Gastrocnemius medialis (tissue), 4 donors: ENCODE measurements at regions of chr6 and their contacts with region 1.

Region 1: DNA sequence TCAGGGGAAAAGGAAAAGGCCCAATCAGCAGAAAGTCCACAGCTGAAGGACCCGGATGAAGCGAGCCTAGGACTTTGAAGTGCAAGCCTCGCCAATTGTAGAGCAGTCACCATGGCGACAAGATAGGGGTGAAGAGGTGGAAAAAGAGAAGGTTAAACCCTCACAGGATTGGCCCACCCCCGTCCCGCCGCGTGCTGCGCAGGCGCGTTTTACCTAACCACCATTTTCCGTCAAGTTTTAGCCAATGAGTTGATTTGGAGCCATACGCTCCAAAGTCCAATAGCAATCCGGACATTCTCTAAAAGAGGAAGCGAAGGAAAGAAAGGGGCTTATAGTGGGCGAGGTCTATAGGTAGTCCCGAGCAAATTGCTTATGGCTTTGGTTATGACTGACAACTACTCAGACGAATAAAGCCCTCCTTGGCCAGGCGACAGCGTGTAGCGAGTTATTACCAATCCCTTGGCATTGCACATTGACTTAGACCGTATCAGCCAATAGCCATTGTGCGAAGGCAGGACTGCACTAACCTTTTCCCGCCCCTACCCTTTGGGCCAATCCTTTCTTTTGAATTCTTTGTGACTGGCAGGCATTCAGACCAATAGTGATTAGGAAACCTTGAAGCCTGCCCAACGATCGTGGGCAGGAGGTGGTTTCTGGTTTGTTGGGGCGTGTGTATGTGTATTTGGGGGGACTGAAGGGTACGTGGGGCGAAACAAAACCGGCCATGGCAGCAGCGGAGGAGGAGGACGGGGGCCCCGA is at the start of gene RNF5:
- DNase-seq: peak; percentile 98 to 99
- ATAC-seq: peak; percentile 84 to 88
- H3K4me3 ChIP-seq: peak within 1 kb of the TSS; percentile 81 to 99 (median 96)
- H3K27ac ChIP-seq: peak within 1 kb of the TSS; percentile 92 to 99 (median 96)
- H3K4me1 ChIP-seq: peaks cover 41 to 46% of the 10 kb centered on the region in 2 donors
- H3K27me3 ChIP-seq: no peaks in the 10 kb centered on the region
- CTCF ChIP-seq: no peak
- POLR2A ChIP-seq: peak; percentile 46 to 63
- total RNA-seq, gene RNF5: 54.6 to 98.3 (median 78.1) TPM

Region 2: GRCh38 chr6:31308050-31308844 is 869.7 kb before region 1 on chr6:
- in situ Hi-C with region 1: no loop called
- intact Hi-C with region 1: no loop called
- DNase-seq: peak in 1 of 2 donors; percentile 19
- ATAC-seq: peak in 1 of 2 donors; percentile 41
- H3K4me3 ChIP-seq: peak overlapping the region; percentile 34 to 61 (median 43)
- H3K27ac ChIP-seq: no peak overlapping the region
- H3K4me1 ChIP-seq: peaks cover 0 to 8% of the 10 kb centered on the region in 2 donors
- H3K27me3 ChIP-seq: peaks cover 4 to 33% (median 28%) of the 10 kb centered on the region in 3 donors
- CTCF ChIP-seq: no peak
- POLR2A ChIP-seq: no peak

Region 3: GRCh38 chr6:31541658-31542521 is 636.1 kb before region 1 on chr6 and contains the start of gene DDX39B:
- in situ Hi-C with region 1: loop called in 1 of 4 experiments (anchors 25 kb)
- intact Hi-C with region 1: no loop called
- DNase-seq: peak; percentile 96 to 97
- ATAC-seq: peak; percentile 94 to 95
- H3K4me3 ChIP-seq: peak within 1 kb of the TSS; percentile 81 to 91 (median 85)
- H3K27ac ChIP-seq: peak within 1 kb of the TSS; percentile 96 to 98 (median 96)
- H3K4me1 ChIP-seq: peaks cover 31 to 38% of the 10 kb centered on the region in 2 donors
- H3K27me3 ChIP-seq: no peaks in the 10 kb centered on the region
- CTCF ChIP-seq: no peak
- POLR2A ChIP-seq: peak; percentile 72 to 77
- total RNA-seq, gene DDX39B: 107 to 198 (median 144) TPM

Region 4: GRCh38 chr6:31901953-31902643 is 275.9 kb before region 1 on chr6 and contains the start of gene ZBTB12:
- in situ Hi-C with region 1: no loop called
- intact Hi-C with region 1: loop called (anchors 5 kb)
- DNase-seq: peak; percentile 78 to 82
- ATAC-seq: peak; percentile 58 to 65
- H3K4me3 ChIP-seq: peak within 1 kb of the TSS; percentile 56 to 93 (median 80)
- H3K27ac ChIP-seq: peak within 1 kb of the TSS; percentile 78 to 89 (median 86)
- H3K4me1 ChIP-seq: peaks cover 15 to 19% of the 10 kb centered on the region in 2 donors
- H3K27me3 ChIP-seq: no peaks in the 10 kb centered on the region
- CTCF ChIP-seq: peak in 1 of 5 experiments; percentile 20
- POLR2A ChIP-seq: peak; percentile 22 to 33
- total RNA-seq, gene ZBTB12: 0.26 TPM in 1 of 4 donors, not detected in the others

Region 5: DNA sequence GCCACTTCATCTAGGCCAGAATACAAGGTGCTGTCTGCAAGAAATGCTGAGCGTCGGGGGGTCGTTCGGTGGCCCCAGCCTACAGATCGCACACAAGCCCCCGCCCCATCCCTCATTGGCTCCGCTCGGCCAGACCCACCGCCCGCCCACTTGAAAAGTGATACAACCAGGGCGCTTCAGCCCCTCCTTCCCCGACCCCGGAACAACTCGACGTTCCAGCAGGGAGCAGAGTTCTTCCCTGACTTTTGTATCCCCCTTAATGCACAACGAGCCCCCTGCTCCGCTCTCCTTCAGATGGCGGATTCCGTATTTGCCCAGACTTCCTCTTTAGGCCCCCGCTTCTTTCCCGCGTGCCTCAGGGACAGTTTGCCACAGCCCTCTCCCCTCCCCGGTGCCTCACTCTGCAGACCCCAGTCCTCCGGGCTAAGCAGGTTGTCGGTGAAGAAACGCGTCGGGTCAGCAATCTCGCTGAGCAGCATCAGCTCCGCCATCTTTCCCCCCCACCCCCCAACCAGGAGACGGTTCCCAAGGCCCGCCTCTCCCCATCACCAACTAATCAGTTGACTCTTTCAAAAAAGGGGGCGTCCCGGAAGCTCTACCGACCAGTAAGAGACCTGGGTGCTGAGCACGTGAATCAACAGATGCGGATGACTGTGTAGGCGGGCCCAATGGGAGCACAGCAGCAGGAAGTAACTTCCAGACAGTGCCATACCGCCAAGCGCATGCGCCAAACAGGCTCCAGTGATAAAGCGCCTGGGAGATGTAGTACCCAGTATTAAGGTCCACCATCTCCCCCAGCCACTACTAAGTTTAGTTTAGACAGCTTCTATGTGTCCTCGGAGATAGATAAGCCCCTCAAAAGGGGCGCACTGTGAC is 50.0 kb before region 1 on chr6 and contains the start of gene ATF6B:
- in situ Hi-C with region 1: no loop called
- intact Hi-C with region 1: loop called (anchors 1 kb)
- DNase-seq: peak; percentile 100
- ATAC-seq: peak; percentile 95 to 96
- H3K4me3 ChIP-seq: peak within 1 kb of the TSS; percentile 91 to 99 (median 96)
- H3K27ac ChIP-seq: peak within 1 kb of the TSS; percentile 89 to 93 (median 92)
- H3K4me1 ChIP-seq: peaks cover 24 to 26% of the 10 kb centered on the region in 2 donors
- H3K27me3 ChIP-seq: no peaks in the 10 kb centered on the region
- CTCF ChIP-seq: no peak
- POLR2A ChIP-seq: peak; percentile 57 to 67
- total RNA-seq, gene ATF6B: 6.8 to 18.4 (median 9.5) TPM

Region 6: GRCh38 chr6:32140420-32141046 is 37.4 kb before region 1 on chr6:
- in situ Hi-C with region 1: no loop called
- intact Hi-C with region 1: no loop called
- DNase-seq: no peak
- ATAC-seq: no peak
- H3K4me3 ChIP-seq: no peak overlapping the region
- H3K27ac ChIP-seq: no peak overlapping the region
- H3K4me1 ChIP-seq: no peaks in the 10 kb centered on the region
- H3K27me3 ChIP-seq: no peaks in the 10 kb centered on the region
- CTCF ChIP-seq: no peak
- POLR2A ChIP-seq: no peak

Region 7: GRCh38 chr6:32188381-32189004 is 10.5 kb after region 1 on chr6:
- in situ Hi-C with region 1: no loop called
- intact Hi-C with region 1: no loop called
- DNase-seq: no peak
- ATAC-seq: no peak
- H3K4me3 ChIP-seq: peak overlapping the region; percentile 71 to 87 (median 78)
- H3K27ac ChIP-seq: peak overlapping the region; percentile 96 to 99 (median 98)
- H3K4me1 ChIP-seq: peaks cover 33 to 50% of the 10 kb centered on the region in 2 donors
- H3K27me3 ChIP-seq: no peaks in the 10 kb centered on the region
- CTCF ChIP-seq: no peak
- POLR2A ChIP-seq: no peak

Region 8: GRCh38 chr6:32843979-32844838 is 666.2 kb after region 1 on chr6 and contains the start of gene PSMB8:
- in situ Hi-C with region 1: no loop called
- intact Hi-C with region 1: loop called (anchors 2 kb)
- DNase-seq: peak; percentile 91 to 95
- ATAC-seq: peak; percentile 99
- H3K4me3 ChIP-seq: peak within 1 kb of the TSS; percentile 66 to 91 (median 72)
- H3K27ac ChIP-seq: peak within 1 kb of the TSS; percentile 82 to 92 (median 91)
- H3K4me1 ChIP-seq: peaks cover 4 to 10% of the 10 kb centered on the region in 2 donors
- H3K27me3 ChIP-seq: no peaks in the 10 kb centered on the region
- CTCF ChIP-seq: peak in 3 of 5 experiments; percentile 27 to 51 (median 44)
- POLR2A ChIP-seq: peak; percentile 72 to 84
- total RNA-seq, gene PSMB8: 7.0 to 20.2 (median 9.2) TPM

Region 9: DNA sequence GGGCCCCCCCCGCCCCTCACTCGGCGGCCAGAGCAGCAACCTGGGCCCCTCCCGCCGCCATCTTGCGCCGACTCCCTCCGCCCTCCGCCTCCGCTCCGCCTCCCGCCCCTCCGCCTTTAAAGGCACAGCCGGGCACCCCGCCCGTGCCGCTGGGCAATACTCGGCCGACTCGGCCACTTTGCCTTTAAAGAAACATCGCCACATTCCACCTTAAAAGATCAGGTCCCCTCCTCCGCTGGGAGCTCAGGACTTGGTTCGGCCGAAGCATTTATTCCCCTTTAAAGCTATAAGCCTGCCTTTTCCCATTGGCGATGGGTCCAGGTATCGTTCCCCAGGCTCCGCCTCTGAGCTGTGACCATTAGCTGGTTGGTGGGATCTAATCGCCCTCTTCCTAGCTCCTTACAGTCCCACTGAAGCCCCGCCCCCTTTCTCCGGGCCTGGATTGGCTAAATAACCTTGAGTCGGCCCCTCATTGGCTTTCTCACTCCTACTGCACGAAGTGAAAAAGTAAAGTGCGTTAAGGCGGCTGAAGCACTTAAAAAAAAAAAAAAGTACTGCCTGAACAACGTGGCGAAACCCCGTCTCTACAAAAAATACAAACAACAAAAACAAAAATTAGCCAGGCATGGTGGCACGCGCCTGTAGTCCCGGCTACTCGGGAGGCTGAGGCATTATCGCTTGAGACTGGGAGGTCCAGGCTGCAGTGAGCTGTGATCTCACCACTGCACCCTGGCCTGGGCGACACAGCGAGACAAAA is 1139.9 kb after region 1 on chr6 and contains the start of gene ZBTB22:
- in situ Hi-C with region 1: no loop called
- intact Hi-C with region 1: loop called (anchors 10 kb)
- DNase-seq: peak; percentile 99 to 100
- ATAC-seq: peak; percentile 84 to 90
- H3K4me3 ChIP-seq: peak within 1 kb of the TSS; percentile 56 to 70 (median 64)
- H3K27ac ChIP-seq: peak within 1 kb of the TSS; percentile 82 to 93 (median 90)
- H3K4me1 ChIP-seq: peaks cover 36 to 66% of the 10 kb centered on the region in 2 donors
- H3K27me3 ChIP-seq: no peaks in the 10 kb centered on the region
- CTCF ChIP-seq: peak in 1 of 5 experiments; percentile 24
- POLR2A ChIP-seq: peak in 1 of 2 donors; percentile 56
- total RNA-seq, gene ZBTB22: 9.0 to 19.3 (median 16.3) TPM